Prostate gland (tissue), 2 donors: ENCODE measurements at regions of chr6 and their contacts with region 1.

Region 1: GRCh38 chr6:3848925-3849605 is at the start of gene FAM50B:
- DNase-seq: peak; percentile 90
- H3K4me3 ChIP-seq: peak within 1 kb of the TSS; percentile 31 to 38
- H3K27ac ChIP-seq: peak within 1 kb of the TSS; percentile 47 to 64
- H3K4me1 ChIP-seq: no peaks in the 10 kb centered on the region
- H3K27me3 ChIP-seq: no peaks in the 10 kb centered on the region
- CTCF ChIP-seq: peak; percentile 93 to 98 (median 96)
- POLR2A ChIP-seq: peak; percentile 48
- total RNA-seq, gene FAM50B: 14.2 to 36.4 TPM

Region 2: DNA sequence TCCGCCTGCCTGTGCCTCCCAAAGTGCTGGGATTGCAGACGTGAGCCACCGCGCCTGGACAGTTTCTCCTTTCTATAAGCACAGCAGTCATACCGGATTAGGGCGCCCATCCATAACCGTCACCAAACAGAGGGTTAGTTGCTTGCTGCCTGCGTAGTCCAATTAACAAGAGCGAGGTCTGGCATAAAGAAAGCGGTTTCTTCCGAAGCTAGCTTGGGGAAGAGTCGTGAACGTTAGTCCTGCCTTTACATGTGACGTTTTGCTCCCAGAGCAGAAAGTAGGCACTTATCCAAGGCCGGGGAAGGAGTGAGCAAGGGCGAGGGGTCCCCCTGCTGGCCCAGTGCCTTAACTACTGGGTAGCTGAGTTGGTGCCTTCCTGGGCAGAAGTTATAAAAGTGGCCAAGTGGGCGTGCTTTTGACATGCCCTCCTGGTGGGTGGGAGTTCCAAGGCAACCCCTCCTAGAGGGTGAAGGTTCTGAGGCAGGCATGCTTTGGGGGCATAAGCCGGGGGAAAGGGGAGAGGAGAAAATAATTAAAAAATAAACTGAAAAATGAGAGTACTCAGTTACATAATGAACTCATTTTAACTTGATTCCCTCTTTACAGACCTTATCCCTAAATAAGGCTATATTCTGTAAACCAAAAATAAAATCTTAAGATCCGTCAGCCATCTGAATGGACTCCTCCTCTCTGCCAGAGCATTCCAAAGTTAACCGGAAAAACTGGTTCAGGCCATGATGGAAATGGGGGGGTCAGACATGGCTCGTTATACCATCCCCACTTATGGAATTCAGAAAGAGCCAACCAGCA is 141.8 kb after region 1 on chr6:
- intact Hi-C with region 1: loop called (anchors 10 kb)
- DNase-seq: peak; percentile 85
- H3K4me3 ChIP-seq: peak overlapping the region; percentile 15 to 22
- H3K27ac ChIP-seq: peak overlapping the region; percentile 52 to 72
- H3K4me1 ChIP-seq: no peaks in the 10 kb centered on the region
- H3K27me3 ChIP-seq: no peaks in the 10 kb centered on the region
- CTCF ChIP-seq: peak; percentile 45 to 86 (median 70)
- POLR2A ChIP-seq: no peak